Activated B cell treated with CpG ODN at 0.5 μM for 24 hours (primary cell): ENCODE measurements at regions of chr11 and their contacts with region 1.

Region 1: DNA sequence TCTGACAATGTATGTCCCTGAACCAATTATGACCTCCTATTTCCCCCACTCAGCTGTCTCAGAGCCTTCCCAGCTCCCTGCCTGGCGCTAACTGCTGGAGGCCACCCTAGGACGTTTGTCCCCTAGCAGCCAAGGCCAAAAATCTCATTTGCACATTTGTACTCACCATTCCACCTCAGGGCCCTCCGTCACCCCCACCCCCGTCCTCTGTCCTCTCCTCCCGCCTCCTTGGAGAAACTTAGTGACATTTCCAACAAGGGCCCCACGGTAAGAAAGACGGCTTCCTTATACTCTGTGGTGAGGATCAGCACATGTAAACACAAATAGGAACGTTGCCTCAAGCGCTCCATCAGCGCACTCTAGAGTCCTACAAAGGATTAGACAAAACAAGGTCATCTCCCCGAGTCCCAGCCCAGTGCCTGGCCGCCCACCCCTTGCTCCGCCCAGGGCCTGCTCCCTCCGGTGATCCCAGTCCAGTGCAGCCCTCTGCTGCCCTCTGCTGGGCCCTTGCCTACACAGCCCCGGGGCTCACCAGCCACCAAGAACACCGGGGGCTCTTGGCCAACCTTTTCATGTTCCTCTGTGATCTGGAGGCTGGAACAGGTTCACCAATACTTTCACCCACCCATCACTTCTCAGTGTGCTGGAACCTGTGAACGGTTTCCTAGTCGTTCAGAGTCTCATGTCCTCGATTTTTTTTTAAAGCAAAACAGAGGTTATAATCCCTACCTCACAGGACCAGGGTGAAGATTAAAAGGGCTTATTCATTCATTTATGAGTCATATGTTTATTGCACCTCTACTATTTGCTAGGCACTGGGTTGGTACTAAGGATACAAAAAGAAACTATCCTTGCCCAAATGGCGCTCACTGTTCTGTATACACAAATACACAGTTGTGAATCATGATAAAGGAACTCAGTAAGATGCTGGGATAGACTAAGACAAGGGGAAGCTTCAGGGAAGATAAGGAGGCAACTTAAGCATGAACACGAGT is 15.3 kb upstream of the CTR9 start:
- DNase-seq: peak; percentile 93
- ATAC-seq: peak; percentile 100
- H3K4me3 Mint-ChIP-seq: peak overlapping the region; percentile 77
- H3K27ac Mint-ChIP-seq: peak overlapping the region; percentile 83
- H3K4me1 Mint-ChIP-seq: peaks cover 13% of the 10 kb centered on the region
- H3K27me3 Mint-ChIP-seq: no peaks in the 10 kb centered on the region
- CTCF ChIP-seq: peak; percentile 65

Region 2: GRCh38 chr11:10208131-10208575 is 527.6 kb before region 1 on chr11:
- CTCF ChIA-PET with region 1: no interaction called
- POLR2A ChIA-PET with region 1: no interaction called
- intact Hi-C with region 1: loop called (anchors 1 kb)
- DNase-seq: no peak
- ATAC-seq: peak; percentile 37
- H3K4me3 Mint-ChIP-seq: no peak overlapping the region
- H3K27ac Mint-ChIP-seq: no peak overlapping the region
- H3K4me1 Mint-ChIP-seq: no peaks in the 10 kb centered on the region
- H3K27me3 Mint-ChIP-seq: no peaks in the 10 kb centered on the region
- CTCF ChIP-seq: peak; percentile 31

Region 3: GRCh38 chr11:10490398-10491241 is 245.2 kb before region 1 on chr11:
- CTCF ChIA-PET with region 1: interaction called, 3 read pairs
- POLR2A ChIA-PET with region 1: no interaction called
- intact Hi-C with region 1: loop called (anchors 1 kb)
- DNase-seq: no peak
- ATAC-seq: no peak
- H3K4me3 Mint-ChIP-seq: no peak overlapping the region
- H3K27ac Mint-ChIP-seq: peak overlapping the region; percentile 91
- H3K4me1 Mint-ChIP-seq: peaks cover 43% of the 10 kb centered on the region
- H3K27me3 Mint-ChIP-seq: no peaks in the 10 kb centered on the region
- CTCF ChIP-seq: no peak

Region 4: DNA sequence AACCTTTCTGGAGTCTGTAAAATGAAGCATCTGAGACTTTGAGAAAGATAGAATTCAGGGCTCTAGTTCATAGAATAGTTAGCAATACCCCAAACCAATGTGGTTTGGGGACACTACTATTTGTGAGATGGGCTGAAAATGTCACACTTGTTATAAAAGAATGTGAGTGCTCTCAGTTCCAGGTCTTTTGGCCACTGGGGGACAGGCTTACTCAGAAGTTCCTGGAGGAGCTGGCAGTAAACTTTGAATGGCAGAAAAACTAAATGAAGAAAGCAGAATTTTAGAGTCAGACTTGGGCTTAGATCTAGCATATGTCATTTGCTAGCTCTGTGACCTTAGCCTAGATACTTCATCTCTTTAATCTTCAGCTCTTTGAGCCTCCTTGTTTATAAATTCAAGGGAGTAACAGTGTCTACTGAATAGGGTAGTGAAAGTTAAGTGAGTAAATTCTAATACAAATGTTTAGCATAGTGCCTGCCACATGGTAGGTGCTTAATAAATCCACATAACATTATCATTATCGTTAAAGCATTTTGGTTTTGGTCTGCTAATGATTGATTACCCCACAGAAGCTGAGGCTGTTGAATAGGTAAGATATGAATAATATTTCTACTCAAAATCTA is 171.0 kb before region 1 on chr11:
- CTCF ChIA-PET with region 1: interaction called, 6 read pairs
- POLR2A ChIA-PET with region 1: no interaction called
- intact Hi-C with region 1: loop called (anchors 1 kb)
- DNase-seq: no peak
- ATAC-seq: peak; percentile 31
- H3K4me3 Mint-ChIP-seq: no peak overlapping the region
- H3K27ac Mint-ChIP-seq: peak overlapping the region; percentile 38
- H3K4me1 Mint-ChIP-seq: peaks cover 44% of the 10 kb centered on the region
- H3K27me3 Mint-ChIP-seq: no peaks in the 10 kb centered on the region
- CTCF ChIP-seq: no peak

Region 5: GRCh38 chr11:10653926-10654810 is 81.6 kb before region 1 on chr11:
- CTCF ChIA-PET with region 1: no interaction called
- POLR2A ChIA-PET with region 1: no interaction called
- intact Hi-C with region 1: loop called (anchors 1 kb)
- DNase-seq: no peak
- ATAC-seq: peak; percentile 53
- H3K4me3 Mint-ChIP-seq: no peak overlapping the region
- H3K27ac Mint-ChIP-seq: peak overlapping the region; percentile 38
- H3K4me1 Mint-ChIP-seq: peaks cover 87% of the 10 kb centered on the region
- H3K27me3 Mint-ChIP-seq: no peaks in the 10 kb centered on the region
- CTCF ChIP-seq: no peak